ENCODE measurements at regions of chr12 and their contacts with region 1.

Region 1: GRCh38 chr12:51661836-51662235 is 70.8 kb downstream of the SCN8A start:
- DNase-seq: no peak
- H3K4me3 ChIP-seq: no peak overlapping the region
- H3K27ac ChIP-seq: no peak overlapping the region
- H3K4me1 ChIP-seq: no peaks in the 10 kb centered on the region
- H3K27me3 ChIP-seq: no peaks in the 10 kb centered on the region
- CTCF ChIP-seq: no peak
- EP300 ChIP-seq: no peak
- POLR2A ChIP-seq: no peak

Region 2: GRCh38 chr12:51714666-51715065 is 52.8 kb after region 1 on chr12:
- in situ Hi-C with region 1: no loop called
- intact Hi-C with region 1: loop called (anchors 2 kb)
- DNase-seq: no peak
- H3K4me3 ChIP-seq: no peak overlapping the region
- H3K27ac ChIP-seq: no peak overlapping the region
- H3K4me1 ChIP-seq: no peaks in the 10 kb centered on the region
- H3K27me3 ChIP-seq: no peaks in the 10 kb centered on the region
- CTCF ChIP-seq: no peak
- EP300 ChIP-seq: no peak
- POLR2A ChIP-seq: no peak

Region 3: DNA sequence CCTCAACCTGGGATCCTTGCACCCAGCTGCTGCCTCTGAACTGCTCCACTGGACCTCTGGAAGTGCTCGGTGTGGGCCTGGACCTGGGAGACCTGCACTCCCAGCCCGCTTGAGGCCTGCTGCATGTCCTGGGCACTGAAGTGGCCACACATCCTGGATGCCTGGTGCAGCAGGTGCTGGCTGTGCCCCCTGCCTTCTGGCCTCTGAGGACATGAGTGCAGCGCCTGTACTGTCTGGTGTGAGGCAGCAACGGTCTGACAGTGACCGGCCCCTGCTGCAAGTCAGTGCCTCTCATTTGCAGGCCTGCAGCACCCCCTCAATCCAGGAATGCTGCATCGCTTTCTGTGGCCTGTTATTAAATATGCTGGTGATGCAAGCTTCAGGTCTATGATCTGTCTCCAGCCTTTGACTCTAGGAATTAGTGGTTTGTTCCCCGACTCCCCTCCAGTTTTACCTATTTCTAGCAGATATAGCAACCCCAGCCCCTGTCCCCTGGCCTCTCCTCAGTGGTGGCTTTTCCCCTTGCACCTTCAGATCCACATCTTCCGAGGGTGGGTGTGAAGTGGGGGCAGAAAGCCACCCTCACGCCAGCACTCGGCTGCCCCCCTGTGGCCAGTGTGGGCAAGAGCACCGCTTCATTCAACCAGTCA is 421.3 kb after region 1 on chr12:
- in situ Hi-C with region 1: no loop called
- intact Hi-C with region 1: no loop called
- DNase-seq: peak; percentile 68
- H3K4me3 ChIP-seq: no peak overlapping the region
- H3K27ac ChIP-seq: peak overlapping the region; percentile 60 to 77 (median 66)
- H3K4me1 ChIP-seq: peaks cover 11 to 27% (median 14%) of the 10 kb centered on the region in 4 donors
- H3K27me3 ChIP-seq: no peaks in the 10 kb centered on the region
- CTCF ChIP-seq: peak; percentile 94 to 98 (median 95)
- EP300 ChIP-seq: no peak
- POLR2A ChIP-seq: no peak

Measured in transverse colon (tissue), 4 donors.